Dorsolateral prefrontal cortex (tissue), 120 donors: ENCODE measurements at regions of chr22 and their contacts with region 1.

Region 1: GRCh38 chr22:43923631-43924464 is at the start of gene PNPLA3:
- DNase-seq: peak; percentile 54 to 95 (median 92)
- H3K4me3 ChIP-seq: peak within 1 kb of the TSS; percentile 35 to 86 (median 73)
- H3K27ac ChIP-seq: peak within 1 kb of the TSS in 16 of 59 donors; percentile 6 to 76 (median 40)
- H3K27me3 ChIP-seq: no peaks in the 10 kb centered on the region
- CTCF ChIP-seq: peak in 4 of 56 donors; percentile 12 to 14 (median 12)
- total RNA-seq, gene PNPLA3: 0.88 to 7.9 (median 3.0) TPM

Region 2: DNA sequence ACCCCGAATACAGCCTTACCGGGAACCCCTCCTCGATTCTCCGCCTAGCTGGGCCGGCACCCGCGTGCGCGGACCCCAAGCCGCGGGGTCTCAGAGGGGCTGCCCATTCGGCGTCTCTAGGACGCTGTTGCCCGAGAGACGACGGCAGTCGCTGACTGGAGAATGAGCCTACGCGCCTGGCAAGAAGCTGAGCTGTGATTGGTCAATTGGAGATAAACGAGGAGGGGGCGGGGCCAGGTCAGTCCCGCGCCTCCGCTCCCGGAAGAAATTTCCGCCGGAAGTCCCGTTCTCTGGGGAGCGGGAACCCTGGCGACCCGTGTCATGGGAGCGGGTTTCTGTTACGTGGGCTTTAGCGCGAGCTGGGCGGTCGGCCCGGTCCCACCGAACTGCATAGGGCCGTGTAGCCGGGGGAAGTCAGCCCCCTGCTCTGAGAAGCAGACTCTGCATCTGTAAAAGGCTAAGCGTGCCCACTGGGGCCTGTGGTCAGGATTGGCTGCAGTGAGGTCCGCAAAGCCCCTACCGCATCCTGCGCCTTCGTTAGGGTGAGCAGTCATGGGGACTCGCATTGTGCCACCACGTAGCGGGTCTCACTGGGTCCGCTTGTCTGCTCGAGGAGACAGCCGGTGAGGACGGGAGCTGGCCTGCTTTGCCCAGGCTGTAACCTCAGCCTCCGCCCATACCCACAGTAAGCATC is 111.6 kb before region 1 on chr22 and contains the start of gene EFCAB6:
- intact Hi-C with region 1: loop called in 1 of 2 experiments (anchors 5 kb)
- DNase-seq: peak; percentile 87 to 96 (median 94)
- H3K4me3 ChIP-seq: peak within 1 kb of the TSS; percentile 60 to 100 (median 93)
- H3K27ac ChIP-seq: peak within 1 kb of the TSS in 57 of 59 donors; percentile 13 to 92 (median 80)
- H3K27me3 ChIP-seq: no peaks in the 10 kb centered on the region
- CTCF ChIP-seq: peak in 17 of 56 donors; percentile 9 to 42 (median 16)
- total RNA-seq, gene EFCAB6: 6.6 to 23.9 (median 13.5) TPM

Region 3: GRCh38 chr22:43955040-43955882 is 31.4 kb after region 1 on chr22 and contains the start of gene SAMM50:
- intact Hi-C with region 1: loop called in 1 of 2 experiments (anchors 5 kb)
- DNase-seq: peak; percentile 89 to 96 (median 94)
- H3K4me3 ChIP-seq: peak within 1 kb of the TSS; percentile 58 to 100 (median 93)
- H3K27ac ChIP-seq: peak within 1 kb of the TSS in 56 of 59 donors; percentile 3 to 92 (median 80)
- H3K27me3 ChIP-seq: no peaks in the 10 kb centered on the region
- CTCF ChIP-seq: peak in 43 of 56 donors; percentile 8 to 58 (median 34)
- total RNA-seq, gene SAMM50: 26.9 to 53.0 (median 37.4) TPM

Region 4: DNA sequence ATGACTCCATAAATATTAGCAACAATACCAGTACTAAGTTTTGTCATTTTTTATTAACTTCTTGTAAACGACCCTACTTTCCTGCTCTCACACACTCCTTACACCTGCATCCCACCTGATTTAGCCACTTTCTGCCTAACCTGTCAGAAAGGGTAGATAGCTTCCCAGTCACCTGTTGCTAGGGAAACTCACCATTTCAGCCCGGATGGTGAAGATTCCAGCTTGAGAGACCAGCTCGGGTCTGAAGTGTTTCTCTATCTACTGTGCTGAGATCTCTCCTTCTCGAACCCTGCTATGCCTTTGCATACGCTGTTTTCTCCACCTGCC is 256.8 kb after region 1 on chr22 and contains the start of gene PARVG:
- intact Hi-C with region 1: no loop called
- DNase-seq: no peak
- H3K4me3 ChIP-seq: peak within 1 kb of the TSS in 37 of 59 donors; percentile 2 to 50 (median 33)
- H3K27ac ChIP-seq: peak within 1 kb of the TSS in 44 of 59 donors; percentile 2 to 81 (median 51)
- H3K27me3 ChIP-seq: peaks cover 0 to 19% (median 0%) of the 10 kb centered on the region in 45 donors
- CTCF ChIP-seq: no peak
- total RNA-seq, gene PARVG: 2.0 to 33.6 (median 9.7) TPM